PC-3 (cell line): ENCODE measurements at regions of chr11 and their contacts with region 1.

Region 1: GRCh38 chr11:34274723-34275401 is 82.9 kb downstream of the ABTB2 start:
- DNase-seq: peak; percentile 99
- ATAC-seq: peak; percentile 98
- H3K4me3 ChIP-seq: peak overlapping the region; percentile 15; the same call in 1 of the 2 replicates
- H3K27ac ChIP-seq: peak overlapping the region; percentile 82
- H3K4me1 ChIP-seq: peaks cover 21% of the 10 kb centered on the region
- H3K27me3 ChIP-seq: no peaks in the 10 kb centered on the region
- CTCF ChIP-seq: no peak

Region 2: DNA sequence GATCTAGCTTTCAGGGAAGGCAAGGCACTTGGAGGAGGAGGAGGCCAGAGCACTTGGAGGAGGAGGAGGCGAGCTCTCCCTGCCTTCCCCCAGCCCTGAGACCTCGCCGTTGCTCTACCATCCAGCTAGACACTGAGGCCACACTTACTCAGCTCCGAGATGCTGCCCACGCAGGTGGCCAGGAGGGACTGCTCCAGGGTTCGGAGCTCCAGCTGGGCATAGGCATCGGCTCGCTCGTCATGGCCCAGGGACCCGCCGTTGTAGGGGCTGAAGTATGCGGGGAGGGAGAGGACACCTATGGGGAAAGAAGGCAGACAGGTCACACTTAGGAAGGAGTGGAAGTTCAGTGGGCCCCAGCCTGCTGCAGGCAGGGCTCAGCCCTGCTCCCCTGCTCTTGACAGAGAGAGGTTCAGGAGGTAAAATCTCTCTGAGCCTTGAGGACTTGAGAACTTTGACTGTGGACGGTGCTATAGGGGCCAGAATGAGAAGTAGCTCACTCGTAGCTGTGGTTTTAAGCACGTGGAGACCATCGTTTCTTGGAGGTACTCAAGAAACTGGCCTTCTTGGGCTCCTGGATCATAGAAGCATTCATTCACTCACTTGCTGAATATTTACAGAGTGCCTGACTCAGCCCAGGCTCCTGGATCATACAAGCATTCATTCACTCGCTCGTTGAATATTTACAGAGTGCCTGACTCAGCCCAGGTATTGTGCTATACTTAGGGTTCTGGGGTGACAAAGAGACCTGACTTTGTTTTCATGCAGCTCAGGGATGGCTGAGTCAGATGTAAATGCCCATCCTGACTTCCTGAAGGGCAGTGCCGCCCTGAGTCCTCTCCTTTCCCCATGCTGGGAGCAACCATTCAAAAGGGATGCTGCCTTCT is 70.2 kb before region 1 on chr11:
- CTCF ChIA-PET with region 1: no interaction called
- POLR2A ChIA-PET with region 1: no interaction called
- intact Hi-C with region 1: loop called (anchors 2 kb)
- DNase-seq: peak; percentile 97
- ATAC-seq: peak; percentile 99
- H3K4me3 ChIP-seq: no peak overlapping the region
- H3K27ac ChIP-seq: peak overlapping the region; percentile 82
- H3K4me1 ChIP-seq: peaks cover 31% of the 10 kb centered on the region
- H3K27me3 ChIP-seq: no peaks in the 10 kb centered on the region
- CTCF ChIP-seq: no peak

Region 3: GRCh38 chr11:34318111-34319037 is 43.5 kb after region 1 on chr11:
- CTCF ChIA-PET with region 1: no interaction called
- POLR2A ChIA-PET with region 1: no interaction called
- intact Hi-C with region 1: loop called (anchors 5 kb)
- DNase-seq: peak; percentile 83
- ATAC-seq: peak; percentile 88
- H3K4me3 ChIP-seq: no peak overlapping the region
- H3K27ac ChIP-seq: peak overlapping the region; percentile 86
- H3K4me1 ChIP-seq: peaks cover 19% of the 10 kb centered on the region
- H3K27me3 ChIP-seq: no peaks in the 10 kb centered on the region
- CTCF ChIP-seq: no peak